Heart right ventricle (tissue), 16 donors: ENCODE measurements at regions of chr3 and their contacts with region 1.

Region 1: DNA sequence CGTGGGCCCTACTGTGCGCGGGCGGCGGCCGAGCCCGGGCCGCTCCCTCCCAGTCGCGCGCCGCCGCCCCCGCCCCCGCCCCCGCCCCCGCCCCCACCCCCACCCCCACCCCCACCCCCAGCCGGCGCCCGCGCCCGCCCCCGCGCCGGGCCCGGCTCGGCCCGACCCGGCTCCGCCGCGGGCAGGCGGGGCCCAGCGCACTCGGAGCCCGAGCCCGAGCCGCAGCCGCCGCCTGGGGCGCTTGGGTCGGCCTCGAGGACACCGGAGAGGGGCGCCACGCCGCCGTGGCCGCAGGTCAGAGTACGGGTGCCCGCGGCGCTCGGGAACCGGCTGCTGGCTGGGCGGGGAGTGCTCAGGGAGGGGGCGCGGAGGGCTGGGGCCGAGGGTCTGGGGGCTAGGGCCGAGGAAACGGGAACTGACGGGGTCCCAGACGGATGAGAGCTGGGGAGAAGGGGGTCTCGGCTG is 1.1 kb upstream of the PPARG start:
- DNase-seq: peak; percentile 47 to 71
- ATAC-seq: peak; percentile 82 to 94 (median 88)
- H3K4me3 ChIP-seq: peak overlapping the region; percentile 53 to 97 (median 92)
- H3K27ac ChIP-seq: peak overlapping the region; percentile 75 to 96 (median 90)
- H3K4me1 ChIP-seq: peaks cover 0 to 39% (median 24%) of the 10 kb centered on the region in 9 donors
- H3K27me3 ChIP-seq: peaks cover 0 to 32% (median 0%) of the 10 kb centered on the region in 7 donors
- CTCF ChIP-seq: peak in 2 of 9 donors; percentile 10 to 17

Region 2: GRCh38 chr3:12143949-12144504 is 143.7 kb before region 1 on chr3:
- intact Hi-C with region 1: loop called in 4 of 10 experiments (anchors 5 to 10 kb)
- DNase-seq: peak; percentile 52 to 54
- ATAC-seq: peak; percentile 79 to 95 (median 86)
- H3K4me3 ChIP-seq: peak overlapping the region in 1 of 10 donors; percentile 18
- H3K27ac ChIP-seq: peak overlapping the region; percentile 60 to 89 (median 80)
- H3K4me1 ChIP-seq: peaks cover 6 to 68% (median 56%) of the 10 kb centered on the region in 9 donors
- H3K27me3 ChIP-seq: no peaks in the 10 kb centered on the region
- CTCF ChIP-seq: no peak

Region 3: GRCh38 chr3:12175844-12176453 is 111.8 kb before region 1 on chr3:
- intact Hi-C with region 1: loop called in 1 of 10 experiments (anchors 5 kb)
- DNase-seq: peak; percentile 55 to 70
- ATAC-seq: peak; percentile 67 to 86 (median 82)
- H3K4me3 ChIP-seq: no peak overlapping the region
- H3K27ac ChIP-seq: no peak overlapping the region
- H3K4me1 ChIP-seq: peaks cover 0 to 58% (median 45%) of the 10 kb centered on the region in 9 donors
- H3K27me3 ChIP-seq: no peaks in the 10 kb centered on the region
- CTCF ChIP-seq: peak; percentile 77 to 95 (median 92)

Region 4: DNA sequence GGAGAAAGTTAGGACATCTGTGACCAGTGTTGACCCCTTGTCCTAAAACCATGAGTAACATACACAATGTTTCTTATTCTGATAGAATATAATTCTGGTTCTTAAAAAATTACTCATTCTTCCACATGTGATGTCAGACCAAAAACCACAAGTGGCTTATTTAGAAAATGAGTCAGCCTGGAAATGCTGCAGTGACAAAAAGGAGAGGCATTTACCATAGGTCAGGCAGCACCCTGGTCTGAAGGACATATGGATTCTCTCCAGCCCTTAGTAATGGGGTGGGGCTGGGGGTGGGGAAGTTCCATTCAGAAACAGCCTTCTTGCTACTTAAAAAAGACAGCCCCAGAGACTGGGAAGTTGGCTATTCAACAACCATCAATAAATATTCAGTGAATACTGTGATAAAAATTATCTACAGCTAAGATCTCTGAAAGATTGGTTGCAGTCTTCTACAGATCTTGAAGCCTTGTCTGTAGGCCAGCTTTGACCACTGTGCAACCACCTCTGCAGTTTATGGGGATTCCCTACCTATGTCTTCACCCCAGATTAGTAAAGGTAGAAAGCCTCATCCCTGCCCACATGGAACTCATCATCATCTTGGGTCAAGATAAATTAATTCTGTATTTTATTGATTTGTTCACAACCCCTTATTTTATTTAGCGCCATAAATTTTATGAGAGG is 94.1 kb before region 1 on chr3:
- intact Hi-C with region 1: loop called in 2 of 10 experiments (anchors 5 to 10 kb)
- DNase-seq: no peak
- ATAC-seq: peak; percentile 44 to 85 (median 68)
- H3K4me3 ChIP-seq: no peak overlapping the region
- H3K27ac ChIP-seq: peak overlapping the region in 1 of 10 donors; percentile 81
- H3K4me1 ChIP-seq: peaks cover 0 to 73% (median 6%) of the 10 kb centered on the region in 9 donors
- H3K27me3 ChIP-seq: no peaks in the 10 kb centered on the region
- CTCF ChIP-seq: no peak

Region 5: GRCh38 chr3:12462159-12462947 is 174.6 kb after region 1 on chr3:
- intact Hi-C with region 1: loop called in 1 of 10 experiments (anchors 5 kb)
- DNase-seq: no peak
- ATAC-seq: peak; percentile 20 to 72 (median 49)
- H3K4me3 ChIP-seq: no peak overlapping the region
- H3K27ac ChIP-seq: peak overlapping the region in 7 of 10 donors; percentile 5 to 58 (median 37)
- H3K4me1 ChIP-seq: peaks cover 0 to 22% (median 15%) of the 10 kb centered on the region in 9 donors
- H3K27me3 ChIP-seq: no peaks in the 10 kb centered on the region
- CTCF ChIP-seq: no peak

Region 6: DNA sequence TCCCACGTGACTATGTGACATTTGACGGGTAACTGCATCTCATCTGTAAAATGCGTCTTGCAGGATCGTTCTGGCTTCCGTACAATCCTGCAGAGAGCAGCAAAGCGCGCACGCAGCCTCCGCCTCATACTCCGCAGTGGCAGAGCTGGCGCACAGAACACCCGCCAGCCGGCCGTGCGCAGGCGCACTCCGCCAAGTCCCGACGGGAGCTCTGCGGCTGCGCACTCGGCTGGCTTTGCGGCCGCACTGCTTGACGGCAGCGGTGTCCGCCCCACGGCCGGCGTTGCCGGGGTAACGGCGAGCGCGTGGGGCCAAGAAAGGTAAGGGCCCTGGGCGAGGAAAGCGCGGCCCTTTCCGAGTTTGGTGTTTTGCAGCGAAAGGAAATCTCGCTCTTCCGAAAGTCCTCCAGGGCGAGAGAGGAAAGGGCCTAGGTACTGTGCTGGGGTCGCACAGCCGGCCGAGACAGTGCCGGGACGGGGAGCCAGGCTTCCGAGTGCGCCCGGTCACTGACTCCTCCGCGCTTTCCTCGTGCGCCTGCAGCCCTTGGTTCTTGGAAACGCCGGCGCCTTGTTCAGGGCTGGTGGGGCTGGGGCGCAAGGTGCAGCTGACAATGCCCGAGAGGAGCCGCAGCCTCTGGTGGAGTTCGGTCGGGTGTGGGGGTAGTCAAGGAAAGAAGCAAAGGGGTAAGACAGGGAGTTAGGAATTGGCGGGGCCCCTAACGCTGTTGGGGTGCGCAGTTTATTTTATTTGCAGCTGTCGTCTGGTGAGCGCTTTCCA is 196.6 kb after region 1 on chr3 and contains the start of gene TSEN2:
- intact Hi-C with region 1: loop called in 8 of 10 experiments (anchors 2 to 5 kb)
- DNase-seq: peak; percentile 89 to 97
- ATAC-seq: peak; percentile 94 to 97 (median 95)
- H3K4me3 ChIP-seq: peak within 1 kb of the TSS; percentile 45 to 88 (median 64)
- H3K27ac ChIP-seq: peak within 1 kb of the TSS in 9 of 10 donors; percentile 64 to 89 (median 82)
- H3K4me1 ChIP-seq: peaks cover 3 to 41% (median 25%) of the 10 kb centered on the region in 9 donors
- H3K27me3 ChIP-seq: no peaks in the 10 kb centered on the region
- CTCF ChIP-seq: peak in 6 of 9 donors; percentile 7 to 47 (median 32)
- total RNA-seq, gene TSEN2: 15.7 to 33.7 (median 19.8) TPM